Activated naive CD4-positive, alpha-beta T cell treated with anti-CD3 and anti-CD28 coated beads for 36 hours (primary cell): ENCODE measurements at regions of chr3 and their contacts with region 1.

Region 1: GRCh38 chr3:69306239-69307185 is 79.4 kb downstream of the FRMD4B start:
- DNase-seq: peak; percentile 82
- H3K4me3 Mint-ChIP-seq: no peak overlapping the region
- H3K27ac Mint-ChIP-seq: peak overlapping the region; percentile 23
- H3K4me1 Mint-ChIP-seq: peaks cover 24% of the 10 kb centered on the region
- H3K27me3 Mint-ChIP-seq: no peaks in the 10 kb centered on the region

Region 2: GRCh38 chr3:69013253-69014021 is 293.1 kb before region 1 on chr3 and contains the start of gene EOGT:
- CTCF ChIA-PET with region 1: no interaction called
- intact Hi-C with region 1: loop called (anchors 1 kb)
- DNase-seq: peak; percentile 88
- H3K4me3 Mint-ChIP-seq: peak within 1 kb of the TSS; percentile 78
- H3K27ac Mint-ChIP-seq: peak within 1 kb of the TSS; percentile 73
- H3K4me1 Mint-ChIP-seq: peaks cover 15% of the 10 kb centered on the region
- H3K27me3 Mint-ChIP-seq: no peaks in the 10 kb centered on the region
- total RNA-seq, gene EOGT: 4.8 TPM

Region 3: DNA sequence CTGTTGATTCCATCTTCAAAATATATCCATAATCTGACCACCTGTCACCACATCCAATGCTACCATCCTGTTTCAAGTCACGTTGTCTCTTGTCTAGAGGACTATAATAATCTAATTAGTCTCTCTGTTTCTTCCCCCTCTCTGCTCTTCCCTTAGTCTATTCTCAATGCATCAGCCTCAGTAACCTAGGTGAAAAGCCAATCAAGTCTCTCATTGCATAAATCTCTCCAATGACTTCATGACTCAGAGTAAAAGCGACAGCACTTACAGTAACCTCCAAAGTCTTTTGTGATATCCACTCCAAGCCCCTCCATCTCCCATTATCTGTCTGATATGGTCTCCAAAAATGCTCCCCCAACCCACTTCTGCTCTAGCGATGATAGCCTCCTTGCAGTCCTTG is 233.6 kb before region 1 on chr3:
- CTCF ChIA-PET with region 1: no interaction called
- intact Hi-C with region 1: no loop called
- DNase-seq: no peak
- H3K4me3 Mint-ChIP-seq: no peak overlapping the region
- H3K27ac Mint-ChIP-seq: peak overlapping the region; percentile 6
- H3K4me1 Mint-ChIP-seq: peaks cover 30% of the 10 kb centered on the region
- H3K27me3 Mint-ChIP-seq: no peaks in the 10 kb centered on the region

Region 4: GRCh38 chr3:69161587-69162307 is 144.8 kb before region 1 on chr3:
- CTCF ChIA-PET with region 1: interaction called, 312 read pairs
- intact Hi-C with region 1: loop called (anchors 1 kb)
- DNase-seq: peak; percentile 56
- H3K4me3 Mint-ChIP-seq: no peak overlapping the region
- H3K27ac Mint-ChIP-seq: no peak overlapping the region
- H3K4me1 Mint-ChIP-seq: peaks cover 11% of the 10 kb centered on the region
- H3K27me3 Mint-ChIP-seq: peaks cover 1% of the 10 kb centered on the region

Region 5: GRCh38 chr3:69212411-69213139 is 93.9 kb before region 1 on chr3:
- CTCF ChIA-PET with region 1: interaction called, 10 read pairs
- intact Hi-C with region 1: loop called (anchors 1 kb)
- DNase-seq: peak; percentile 17
- H3K4me3 Mint-ChIP-seq: no peak overlapping the region
- H3K27ac Mint-ChIP-seq: peak overlapping the region; percentile 56
- H3K4me1 Mint-ChIP-seq: peaks cover 36% of the 10 kb centered on the region
- H3K27me3 Mint-ChIP-seq: no peaks in the 10 kb centered on the region

Region 6: GRCh38 chr3:69282181-69282580 is 24.3 kb before region 1 on chr3:
- CTCF ChIA-PET with region 1: interaction called, 25 read pairs
- intact Hi-C with region 1: loop called (anchors 1 kb)
- DNase-seq: peak; percentile 84
- H3K4me3 Mint-ChIP-seq: no peak overlapping the region
- H3K27ac Mint-ChIP-seq: peak overlapping the region; percentile 33
- H3K4me1 Mint-ChIP-seq: peaks cover 21% of the 10 kb centered on the region
- H3K27me3 Mint-ChIP-seq: no peaks in the 10 kb centered on the region

Region 7: GRCh38 chr3:69410250-69410649 is 103.7 kb after region 1 on chr3:
- CTCF ChIA-PET with region 1: interaction called, 28 read pairs
- intact Hi-C with region 1: loop called (anchors 1 kb)
- DNase-seq: peak; percentile 88
- H3K4me3 Mint-ChIP-seq: no peak overlapping the region
- H3K27ac Mint-ChIP-seq: no peak overlapping the region
- H3K4me1 Mint-ChIP-seq: peaks cover 3% of the 10 kb centered on the region
- H3K27me3 Mint-ChIP-seq: peaks cover 5% of the 10 kb centered on the region

Region 8: DNA sequence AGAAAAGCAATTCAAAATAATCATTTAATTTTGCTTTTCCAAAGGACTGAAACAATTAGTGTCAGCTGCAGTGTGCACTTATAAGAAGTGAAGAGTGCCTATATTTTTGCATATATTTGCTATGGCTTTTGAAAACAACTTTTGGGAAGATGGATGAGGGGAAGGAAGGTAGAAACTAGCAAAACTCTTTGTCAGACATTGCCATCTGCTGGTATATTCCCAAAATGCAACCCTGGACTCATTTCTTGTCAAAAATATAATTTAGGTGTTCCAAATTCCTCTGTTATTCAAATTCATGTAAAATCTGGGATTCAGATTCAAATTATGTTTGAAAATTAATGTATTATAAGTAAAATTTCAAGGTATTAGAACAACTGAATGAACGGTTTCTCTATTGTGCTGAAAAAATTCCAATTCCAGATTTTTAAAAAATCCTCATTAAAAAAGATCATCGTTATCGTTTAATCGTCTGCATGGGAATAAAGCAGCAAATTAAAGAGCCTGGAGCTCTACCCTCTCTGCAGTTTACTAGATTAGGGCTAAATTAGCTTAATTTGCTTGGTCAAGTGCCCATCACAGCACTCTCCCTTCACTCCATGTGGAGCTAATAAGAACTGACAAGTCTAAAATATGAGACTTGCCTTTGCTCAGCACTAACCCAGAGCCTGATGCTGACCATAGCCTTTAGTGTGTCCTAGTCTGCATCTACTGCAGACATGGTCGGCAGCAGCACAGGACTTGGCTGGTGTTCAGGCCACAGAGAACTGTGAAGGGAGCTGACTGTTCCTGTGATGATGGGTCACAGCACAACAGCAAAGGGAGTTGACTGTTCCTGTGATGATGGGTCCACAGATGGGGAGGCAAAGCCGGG is 364.8 kb after region 1 on chr3:
- CTCF ChIA-PET with region 1: interaction called, 3 read pairs
- intact Hi-C with region 1: loop called (anchors 2 kb)
- DNase-seq: peak; percentile 30
- H3K4me3 Mint-ChIP-seq: no peak overlapping the region
- H3K27ac Mint-ChIP-seq: no peak overlapping the region
- H3K4me1 Mint-ChIP-seq: no peaks in the 10 kb centered on the region
- H3K27me3 Mint-ChIP-seq: no peaks in the 10 kb centered on the region